Caco-2 (cell line): ENCODE measurements at regions of chr4 and their contacts with region 1.

Region 1: DNA sequence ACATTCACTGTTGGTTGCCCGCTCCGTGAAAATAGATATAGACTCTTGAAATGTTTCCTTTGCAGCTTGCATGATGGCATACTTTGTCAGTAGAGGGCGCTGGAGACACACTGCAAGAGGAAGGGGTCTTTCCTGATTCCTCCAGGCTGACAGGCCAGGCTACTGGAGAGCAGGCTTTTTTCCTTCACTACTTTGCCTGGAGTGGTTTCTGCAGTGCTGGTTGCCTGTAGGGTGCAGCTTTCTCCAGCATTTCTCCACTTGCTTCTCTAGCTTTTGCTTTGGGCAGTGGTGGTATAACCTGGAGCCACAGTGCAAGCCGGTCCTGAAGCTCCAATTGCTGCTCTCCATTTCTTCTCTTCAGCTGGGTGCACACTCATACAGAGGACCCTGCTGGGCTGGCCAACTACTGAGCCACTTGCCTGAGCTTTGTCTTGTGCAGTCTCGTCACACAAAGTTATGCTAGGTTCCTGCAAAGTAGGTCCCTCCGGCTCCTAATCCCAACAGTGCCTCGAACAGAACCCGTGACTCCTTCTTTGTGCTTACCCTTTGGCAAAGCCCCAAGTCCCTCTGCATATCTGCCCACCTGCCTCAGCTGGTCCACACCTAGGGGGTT is 46.3 kb downstream of the RASSF6 start:
- DNase-seq: peak; percentile 80
- H3K4me3 ChIP-seq: no peak overlapping the region
- H3K4me3 Mint-ChIP-seq: no peak overlapping the region
- H3K27ac Mint-ChIP-seq: no peak overlapping the region
- H3K4me1 ChIP-seq: no peaks in the 10 kb centered on the region
- H3K4me1 Mint-ChIP-seq: no peaks in the 10 kb centered on the region
- H3K27me3 ChIP-seq: no peaks in the 10 kb centered on the region
- H3K27me3 Mint-ChIP-seq: no peaks in the 10 kb centered on the region
- CTCF ChIP-seq: peak; percentile 83 to 86

Region 2: DNA sequence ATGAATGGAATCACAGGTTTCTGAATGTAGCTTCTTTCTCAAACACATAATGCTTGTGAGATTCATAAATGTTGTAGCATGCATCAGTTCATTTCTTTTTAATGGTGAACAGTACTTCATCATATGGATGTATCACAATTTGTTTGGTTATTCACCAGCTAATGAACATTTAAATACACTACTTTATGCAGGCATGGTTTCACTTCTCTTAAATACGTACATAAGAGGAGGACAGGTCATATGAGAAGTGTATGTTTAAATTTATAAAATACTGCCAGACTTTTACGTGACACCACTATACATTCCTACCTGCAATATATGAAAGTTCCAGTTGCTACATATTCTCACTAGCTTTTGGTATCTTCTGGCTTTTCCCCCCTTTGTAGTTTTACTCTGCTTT is 380.7 kb before region 1 on chr4:
- CTCF ChIA-PET with region 1: no interaction called
- POLR2A ChIA-PET with region 1: no interaction called
- intact Hi-C with region 1: no loop called
- DNase-seq: no peak
- H3K4me3 ChIP-seq: no peak overlapping the region
- H3K4me3 Mint-ChIP-seq: no peak overlapping the region
- H3K27ac Mint-ChIP-seq: no peak overlapping the region
- H3K4me1 ChIP-seq: no peaks in the 10 kb centered on the region
- H3K4me1 Mint-ChIP-seq: no peaks in the 10 kb centered on the region
- H3K27me3 ChIP-seq: no peaks in the 10 kb centered on the region
- H3K27me3 Mint-ChIP-seq: no peaks in the 10 kb centered on the region
- CTCF ChIP-seq: no peak

Region 3: DNA sequence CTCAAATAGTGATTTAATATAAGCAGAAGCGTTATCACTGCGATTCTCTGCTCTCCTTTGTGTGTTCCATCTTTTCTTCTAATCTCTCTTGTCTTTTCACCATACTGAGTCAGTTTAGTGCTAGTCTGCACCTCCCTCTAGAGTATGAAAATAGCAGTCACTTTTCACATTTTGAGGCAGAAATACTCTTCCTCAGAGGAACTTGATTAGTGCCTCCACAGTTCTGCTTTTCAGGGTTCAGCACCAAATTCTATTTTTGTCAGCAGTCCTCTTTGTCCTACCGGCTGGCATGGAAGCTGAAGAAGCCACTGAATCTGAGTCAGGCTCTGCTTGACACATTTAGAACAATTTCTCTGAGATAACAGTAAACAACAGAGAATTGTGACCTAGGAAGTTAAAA is 265.6 kb before region 1 on chr4:
- CTCF ChIA-PET with region 1: no interaction called
- POLR2A ChIA-PET with region 1: no interaction called
- intact Hi-C with region 1: loop called (anchors 10 kb)
- DNase-seq: no peak
- H3K4me3 ChIP-seq: no peak overlapping the region
- H3K4me3 Mint-ChIP-seq: no peak overlapping the region
- H3K27ac Mint-ChIP-seq: no peak overlapping the region
- H3K4me1 ChIP-seq: no peaks in the 10 kb centered on the region
- H3K4me1 Mint-ChIP-seq: peaks cover 11% of the 10 kb centered on the region
- H3K27me3 ChIP-seq: no peaks in the 10 kb centered on the region
- H3K27me3 Mint-ChIP-seq: no peaks in the 10 kb centered on the region
- CTCF ChIP-seq: peak; percentile 23 to 40

Region 4: GRCh38 chr4:73442275-73442674 is 131.6 kb before region 1 on chr4:
- CTCF ChIA-PET with region 1: no interaction called
- POLR2A ChIA-PET with region 1: no interaction called
- intact Hi-C with region 1: no loop called
- DNase-seq: no peak
- H3K4me3 ChIP-seq: no peak overlapping the region
- H3K4me3 Mint-ChIP-seq: no peak overlapping the region
- H3K27ac Mint-ChIP-seq: no peak overlapping the region
- H3K4me1 ChIP-seq: peaks cover 15% of the 10 kb centered on the region
- H3K4me1 Mint-ChIP-seq: no peaks in the 10 kb centered on the region
- H3K27me3 ChIP-seq: no peaks in the 10 kb centered on the region
- H3K27me3 Mint-ChIP-seq: no peaks in the 10 kb centered on the region
- CTCF ChIP-seq: no peak

Region 5: DNA sequence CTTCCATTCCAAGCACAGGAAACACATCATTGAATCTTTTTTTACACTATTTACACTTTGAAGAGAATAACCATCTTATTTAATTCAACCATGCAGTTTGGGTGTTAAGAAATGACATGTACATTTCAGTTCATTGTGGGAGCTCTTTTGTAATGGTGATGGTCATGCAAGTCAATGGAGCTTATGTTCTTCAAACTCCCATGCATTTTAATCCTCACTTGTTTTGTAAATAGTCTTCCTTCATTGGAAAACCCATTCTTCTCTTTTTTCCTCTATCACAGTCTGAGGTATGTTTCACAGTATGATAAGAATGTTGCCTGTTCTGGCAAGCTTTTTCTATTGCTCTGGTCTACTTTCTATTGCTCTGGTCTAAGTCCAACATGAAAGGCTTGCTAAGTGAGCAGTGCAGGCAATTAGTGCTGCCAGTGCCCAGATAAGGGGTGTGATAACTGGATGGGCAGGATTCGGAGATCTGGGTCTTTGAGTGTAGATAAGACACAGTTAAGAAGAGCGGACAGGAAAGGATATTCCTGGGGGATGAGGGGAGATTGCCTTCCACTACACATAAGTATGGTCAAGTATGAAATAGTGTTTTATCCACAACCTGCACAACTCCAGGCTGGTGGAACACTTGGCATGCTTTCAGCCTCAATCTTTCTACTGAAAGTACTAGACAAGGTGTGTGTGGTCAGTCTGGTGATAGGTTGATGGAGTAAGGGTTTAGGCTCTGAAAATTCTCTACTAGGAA is 120.8 kb before region 1 on chr4:
- CTCF ChIA-PET with region 1: no interaction called
- POLR2A ChIA-PET with region 1: no interaction called
- intact Hi-C with region 1: loop called (anchors 1 kb)
- DNase-seq: peak; percentile 70 to 90
- H3K4me3 ChIP-seq: no peak overlapping the region
- H3K4me3 Mint-ChIP-seq: peak overlapping the region; percentile 48
- H3K27ac Mint-ChIP-seq: peak overlapping the region; percentile 19
- H3K4me1 ChIP-seq: peaks cover 44% of the 10 kb centered on the region
- H3K4me1 Mint-ChIP-seq: peaks cover 23% of the 10 kb centered on the region
- H3K27me3 ChIP-seq: no peaks in the 10 kb centered on the region
- H3K27me3 Mint-ChIP-seq: no peaks in the 10 kb centered on the region
- CTCF ChIP-seq: no peak

Region 6: GRCh38 chr4:73523126-73523825 is 50.6 kb before region 1 on chr4:
- CTCF ChIA-PET with region 1: no interaction called
- POLR2A ChIA-PET with region 1: no interaction called
- intact Hi-C with region 1: loop called (anchors 1 kb)
- DNase-seq: no peak
- H3K4me3 ChIP-seq: no peak overlapping the region
- H3K4me3 Mint-ChIP-seq: no peak overlapping the region
- H3K27ac Mint-ChIP-seq: no peak overlapping the region
- H3K4me1 ChIP-seq: no peaks in the 10 kb centered on the region
- H3K4me1 Mint-ChIP-seq: no peaks in the 10 kb centered on the region
- H3K27me3 ChIP-seq: no peaks in the 10 kb centered on the region
- H3K27me3 Mint-ChIP-seq: no peaks in the 10 kb centered on the region
- CTCF ChIP-seq: no peak

Region 7: DNA sequence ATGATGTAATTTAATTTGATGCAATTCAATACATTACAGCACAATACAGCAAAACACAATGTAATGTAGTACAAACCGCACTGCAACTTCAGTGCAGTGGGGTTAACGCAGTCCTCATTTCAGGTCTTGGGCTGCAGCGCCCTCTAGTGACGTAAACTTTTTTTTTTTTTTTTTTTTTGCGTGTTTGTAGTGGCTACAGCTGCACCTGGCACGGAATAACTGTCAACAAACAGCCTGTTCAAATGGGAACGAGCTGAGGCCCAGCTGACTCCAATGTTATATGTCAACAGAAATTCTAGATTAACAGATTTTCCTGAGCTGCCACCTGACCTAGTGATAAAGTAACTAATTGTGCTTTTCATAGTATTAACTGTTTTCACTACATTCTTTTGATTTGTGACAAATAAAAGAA is 79.8 kb after region 1 on chr4:
- CTCF ChIA-PET with region 1: interaction called, 13 read pairs
- POLR2A ChIA-PET with region 1: no interaction called
- intact Hi-C with region 1: loop called (anchors 1 kb)
- DNase-seq: peak in 1 of 2 experiments; percentile 28
- H3K4me3 ChIP-seq: no peak overlapping the region
- H3K4me3 Mint-ChIP-seq: no peak overlapping the region
- H3K27ac Mint-ChIP-seq: no peak overlapping the region
- H3K4me1 ChIP-seq: no peaks in the 10 kb centered on the region
- H3K4me1 Mint-ChIP-seq: no peaks in the 10 kb centered on the region
- H3K27me3 ChIP-seq: no peaks in the 10 kb centered on the region
- H3K27me3 Mint-ChIP-seq: no peaks in the 10 kb centered on the region
- CTCF ChIP-seq: peak; percentile 46 to 63

Region 8: GRCh38 chr4:73897380-73898136 is 323.7 kb after region 1 on chr4:
- CTCF ChIA-PET with region 1: no interaction called
- POLR2A ChIA-PET with region 1: no interaction called
- intact Hi-C with region 1: no loop called
- DNase-seq: no peak
- H3K4me3 ChIP-seq: no peak overlapping the region
- H3K4me3 Mint-ChIP-seq: no peak overlapping the region
- H3K27ac Mint-ChIP-seq: no peak overlapping the region
- H3K4me1 ChIP-seq: peaks cover 20% of the 10 kb centered on the region
- H3K4me1 Mint-ChIP-seq: no peaks in the 10 kb centered on the region
- H3K27me3 ChIP-seq: no peaks in the 10 kb centered on the region
- H3K27me3 Mint-ChIP-seq: no peaks in the 10 kb centered on the region
- CTCF ChIP-seq: no peak